CD4-positive, alpha-beta T cell (primary cell): ENCODE measurements at regions of chr1 and their contacts with region 1.

Region 1: DNA sequence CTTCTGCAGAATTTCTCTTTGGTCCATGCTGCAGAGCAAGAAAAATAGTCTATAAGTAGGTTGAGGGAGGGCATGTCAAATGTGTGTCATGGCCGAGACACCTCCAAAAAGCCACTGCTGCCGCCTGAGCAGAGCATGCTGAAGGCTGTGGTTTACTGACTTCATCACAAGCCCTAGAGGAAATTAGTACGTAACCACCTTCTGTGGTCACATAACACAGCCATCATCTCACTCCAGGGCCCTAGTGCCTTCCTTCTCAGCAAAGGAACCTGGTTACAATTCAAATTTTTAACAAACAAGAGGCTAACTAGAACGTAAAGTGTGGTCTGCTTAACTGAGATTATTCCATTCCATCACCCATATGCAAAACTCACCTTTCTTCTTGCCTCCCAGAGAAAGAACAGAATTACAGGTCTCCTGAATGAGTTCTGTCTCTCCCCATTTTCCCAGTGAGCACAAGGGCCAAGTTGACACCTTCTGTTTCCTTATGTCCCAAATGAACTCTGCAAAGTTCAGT is at the start of gene PTPN22:
- DNase-seq: peak; percentile 65 to 95 (median 75)
- ATAC-seq: peak; percentile 92
- H3K4me3 ChIP-seq: peak within 1 kb of the TSS; percentile 55
- H3K4me3 Mint-ChIP-seq: peak within 1 kb of the TSS; percentile 90
- H3K27ac ChIP-seq: peak within 1 kb of the TSS; percentile 75 to 78
- H3K27ac Mint-ChIP-seq: peak within 1 kb of the TSS; percentile 94
- H3K4me1 ChIP-seq: peaks cover 38% of the 10 kb centered on the region
- H3K4me1 Mint-ChIP-seq: peaks cover 75% of the 10 kb centered on the region
- H3K27me3 ChIP-seq: no peaks in the 10 kb centered on the region
- H3K27me3 Mint-ChIP-seq: no peaks in the 10 kb centered on the region
- CTCF ChIP-seq: no peak
- total RNA-seq, gene PTPN22: 28.3 to 30.2 TPM

Region 2: DNA sequence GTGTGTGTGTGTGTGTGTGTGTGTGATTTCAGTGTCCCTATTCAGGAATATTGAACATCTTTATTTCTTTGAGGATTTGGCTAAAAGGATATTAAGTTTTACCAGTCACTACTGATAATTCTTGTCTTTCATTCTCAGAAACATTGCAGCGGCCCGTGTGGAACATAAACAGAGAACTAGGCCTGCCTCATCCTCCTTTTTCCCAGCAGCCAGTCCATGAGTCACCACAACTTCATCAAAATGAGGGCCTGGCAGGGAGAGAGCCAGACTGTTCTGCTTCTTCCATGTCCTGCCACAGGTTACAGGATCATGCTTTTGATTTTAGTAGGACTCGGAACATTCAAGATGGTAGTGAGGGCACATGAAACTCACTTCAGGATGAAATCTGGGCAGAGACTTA is 747.9 kb before region 1 on chr1:
- CTCF ChIA-PET with region 1: no interaction called
- POLR2A ChIA-PET with region 1: no interaction called
- intact Hi-C with region 1: no loop called
- DNase-seq: no peak
- ATAC-seq: no peak
- H3K4me3 ChIP-seq: no peak overlapping the region
- H3K4me3 Mint-ChIP-seq: no peak overlapping the region
- H3K27ac ChIP-seq: no peak overlapping the region
- H3K27ac Mint-ChIP-seq: no peak overlapping the region
- H3K4me1 ChIP-seq: no peaks in the 10 kb centered on the region
- H3K4me1 Mint-ChIP-seq: no peaks in the 10 kb centered on the region
- H3K27me3 ChIP-seq: no peaks in the 10 kb centered on the region
- H3K27me3 Mint-ChIP-seq: no peaks in the 10 kb centered on the region
- CTCF ChIP-seq: no peak

Region 3: DNA sequence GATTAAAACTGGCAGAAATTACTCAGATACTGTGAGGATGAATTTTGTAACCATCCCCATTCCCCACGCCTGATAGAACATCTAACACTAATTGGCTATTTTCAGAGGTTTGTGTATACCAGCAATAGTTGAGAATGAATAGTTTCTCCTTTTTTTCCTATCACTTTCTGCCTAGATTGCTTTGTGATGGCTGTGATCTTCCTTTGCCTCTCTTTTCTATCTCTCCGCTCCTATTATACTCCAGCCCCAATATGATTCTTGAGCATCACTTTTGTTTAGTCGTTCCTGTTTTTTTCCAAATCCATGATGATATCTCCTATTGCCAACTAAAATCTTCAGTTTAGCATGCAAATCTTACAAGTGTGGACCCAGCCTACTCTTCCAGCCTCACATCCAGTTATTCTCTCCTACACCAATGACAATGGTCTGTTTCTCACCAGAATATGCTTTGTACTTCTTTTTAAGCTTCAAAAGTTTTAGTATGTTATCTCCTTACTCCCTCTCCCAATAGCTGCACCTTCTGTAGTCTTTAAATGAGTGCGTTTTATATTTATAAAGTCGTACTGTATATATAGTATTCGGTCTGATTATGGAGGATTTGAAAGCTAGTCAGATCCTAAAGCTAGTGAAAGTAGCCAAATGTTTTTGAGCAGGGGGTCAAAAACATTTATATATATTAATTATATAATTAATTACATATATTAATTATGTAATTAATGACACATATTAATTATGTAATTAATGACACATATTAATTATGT is 456.2 kb before region 1 on chr1:
- CTCF ChIA-PET with region 1: no interaction called
- POLR2A ChIA-PET with region 1: no interaction called
- intact Hi-C with region 1: loop called in 1 of 2 experiments (anchors 10 kb)
- DNase-seq: peak in 1 of 14 experiments; percentile 27
- ATAC-seq: no peak
- H3K4me3 ChIP-seq: no peak overlapping the region
- H3K4me3 Mint-ChIP-seq: no peak overlapping the region
- H3K27ac ChIP-seq: no peak overlapping the region
- H3K27ac Mint-ChIP-seq: no peak overlapping the region
- H3K4me1 ChIP-seq: no peaks in the 10 kb centered on the region
- H3K4me1 Mint-ChIP-seq: peaks cover 5% of the 10 kb centered on the region
- H3K27me3 ChIP-seq: no peaks in the 10 kb centered on the region
- H3K27me3 Mint-ChIP-seq: no peaks in the 10 kb centered on the region
- CTCF ChIP-seq: no peak

Region 4: GRCh38 chr1:113493533-113493932 is 378.1 kb before region 1 on chr1:
- CTCF ChIA-PET with region 1: no interaction called
- POLR2A ChIA-PET with region 1: no interaction called
- intact Hi-C with region 1: no loop called
- DNase-seq: no peak
- ATAC-seq: no peak
- H3K4me3 ChIP-seq: no peak overlapping the region
- H3K4me3 Mint-ChIP-seq: no peak overlapping the region
- H3K27ac ChIP-seq: no peak overlapping the region
- H3K27ac Mint-ChIP-seq: no peak overlapping the region
- H3K4me1 ChIP-seq: no peaks in the 10 kb centered on the region
- H3K4me1 Mint-ChIP-seq: no peaks in the 10 kb centered on the region
- H3K27me3 ChIP-seq: no peaks in the 10 kb centered on the region
- H3K27me3 Mint-ChIP-seq: no peaks in the 10 kb centered on the region
- CTCF ChIP-seq: no peak

Region 5: DNA sequence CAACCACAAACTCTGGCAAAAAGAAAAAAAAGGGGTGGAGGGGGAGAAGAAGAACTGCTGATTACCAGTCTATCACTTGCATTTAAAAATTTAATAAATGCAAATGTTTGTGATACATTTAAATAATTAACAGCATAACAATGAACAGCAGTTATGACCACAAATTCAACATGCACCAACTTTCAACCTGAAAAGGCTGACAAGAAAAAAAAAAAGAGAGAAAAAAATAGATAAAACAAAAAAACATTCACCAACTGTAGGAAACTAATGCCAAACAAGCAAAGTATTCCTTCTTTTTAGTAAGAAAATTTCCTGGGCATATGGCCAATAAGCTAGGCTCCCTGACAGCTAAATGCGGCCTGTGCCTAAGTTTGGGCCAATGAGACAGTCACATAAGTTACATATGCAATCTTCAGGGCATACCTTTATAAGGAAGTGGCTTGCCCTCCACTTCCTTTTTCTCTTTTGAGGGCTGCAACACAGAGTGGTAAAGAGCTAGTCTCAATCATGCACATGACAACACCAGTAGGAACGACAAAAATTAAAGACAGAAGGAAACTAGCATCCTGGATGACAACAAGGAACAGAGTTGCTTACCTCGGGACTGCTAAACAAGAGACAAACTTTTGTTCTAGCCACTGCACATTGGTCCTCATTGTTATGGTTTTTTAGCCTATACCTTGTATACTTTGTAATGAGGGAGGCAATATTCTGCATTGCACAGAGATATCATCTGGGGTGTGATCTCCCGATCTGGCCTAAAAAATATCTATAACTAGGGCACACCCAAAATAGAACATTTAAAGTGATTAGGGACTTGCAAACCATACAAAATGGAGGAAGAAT is 88.2 kb before region 1 on chr1:
- CTCF ChIA-PET with region 1: no interaction called
- POLR2A ChIA-PET with region 1: no interaction called
- intact Hi-C with region 1: loop called in 1 of 2 experiments (anchors 5 kb)
- DNase-seq: peak in 10 of 14 experiments; percentile 15 to 90 (median 44)
- ATAC-seq: peak; percentile 92
- H3K4me3 ChIP-seq: peak overlapping the region; percentile 11
- H3K4me3 Mint-ChIP-seq: peak overlapping the region; percentile 49
- H3K27ac ChIP-seq: peak overlapping the region; percentile 67 to 80
- H3K27ac Mint-ChIP-seq: no peak overlapping the region
- H3K4me1 ChIP-seq: peaks cover 37% of the 10 kb centered on the region
- H3K4me1 Mint-ChIP-seq: peaks cover 30% of the 10 kb centered on the region
- H3K27me3 ChIP-seq: no peaks in the 10 kb centered on the region
- H3K27me3 Mint-ChIP-seq: no peaks in the 10 kb centered on the region
- CTCF ChIP-seq: no peak

Region 6: GRCh38 chr1:113804421-113805255 is 67.0 kb before region 1 on chr1:
- CTCF ChIA-PET with region 1: no interaction called
- POLR2A ChIA-PET with region 1: no interaction called
- intact Hi-C with region 1: no loop called
- DNase-seq: no peak
- ATAC-seq: no peak
- H3K4me3 ChIP-seq: no peak overlapping the region
- H3K4me3 Mint-ChIP-seq: peak overlapping the region; percentile 39
- H3K27ac ChIP-seq: no peak overlapping the region
- H3K27ac Mint-ChIP-seq: no peak overlapping the region
- H3K4me1 ChIP-seq: peaks cover 26% of the 10 kb centered on the region
- H3K4me1 Mint-ChIP-seq: peaks cover 92% of the 10 kb centered on the region
- H3K27me3 ChIP-seq: no peaks in the 10 kb centered on the region
- H3K27me3 Mint-ChIP-seq: no peaks in the 10 kb centered on the region
- CTCF ChIP-seq: no peak

Region 7: DNA sequence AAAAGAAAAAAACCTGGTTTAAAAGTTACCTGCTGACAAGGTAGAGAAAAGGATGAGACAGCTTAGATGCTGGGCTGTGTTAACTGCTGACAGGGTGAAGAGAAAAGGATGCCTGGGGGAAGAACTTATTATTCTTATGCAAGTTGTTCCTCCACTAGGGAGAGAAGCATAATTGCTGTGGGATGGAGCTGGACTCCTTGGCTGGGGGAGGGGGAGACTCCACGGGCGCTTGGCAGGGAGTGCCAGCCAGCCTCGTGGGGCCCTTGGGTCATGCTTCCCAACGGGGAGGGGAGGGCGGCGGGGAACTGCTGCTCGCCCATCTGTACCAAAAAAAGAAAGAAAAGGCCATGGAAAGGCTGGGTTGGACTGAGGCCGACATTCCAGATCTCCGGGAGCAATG is 1030.2 kb after region 1 on chr1:
- CTCF ChIA-PET with region 1: no interaction called
- POLR2A ChIA-PET with region 1: no interaction called
- intact Hi-C with region 1: no loop called
- DNase-seq: no peak
- ATAC-seq: no peak
- H3K4me3 ChIP-seq: no peak overlapping the region
- H3K4me3 Mint-ChIP-seq: no peak overlapping the region
- H3K27ac ChIP-seq: no peak overlapping the region
- H3K27ac Mint-ChIP-seq: no peak overlapping the region
- H3K4me1 ChIP-seq: no peaks in the 10 kb centered on the region
- H3K4me1 Mint-ChIP-seq: no peaks in the 10 kb centered on the region
- H3K27me3 ChIP-seq: peaks cover 5 to 7% of the 10 kb centered on the region in 2 experiments
- H3K27me3 Mint-ChIP-seq: peaks cover 28% of the 10 kb centered on the region
- CTCF ChIP-seq: no peak